MCF 10A (cell line): ENCODE measurements at regions of chr1 and their contacts with region 1.

Region 1: GRCh38 chr1:6052543-6053205 is 7.0 kb downstream of the KCNAB2 start:
- DNase-seq: peak; percentile 72
- H3K4me3 Mint-ChIP-seq: no peak overlapping the region
- H3K27ac Mint-ChIP-seq: no peak overlapping the region
- H3K4me1 Mint-ChIP-seq: peaks cover 10% of the 10 kb centered on the region
- H3K27me3 Mint-ChIP-seq: no peaks in the 10 kb centered on the region
- CTCF ChIP-seq: peak; percentile 45

Region 2: GRCh38 chr1:6199298-6200187 is 146.9 kb after region 1 on chr1 and contains the start of gene RPL22:
- CTCF ChIA-PET with region 1: no interaction called
- POLR2A ChIA-PET with region 1: interaction called, 4 read pairs
- intact Hi-C with region 1: loop called (anchors 10 kb)
- DNase-seq: peak; percentile 100
- H3K4me3 Mint-ChIP-seq: peak within 1 kb of the TSS; percentile 87
- H3K27ac Mint-ChIP-seq: peak within 1 kb of the TSS; percentile 97
- H3K4me1 Mint-ChIP-seq: peaks cover 25% of the 10 kb centered on the region
- H3K27me3 Mint-ChIP-seq: no peaks in the 10 kb centered on the region
- CTCF ChIP-seq: no peak
- total RNA-seq, gene RPL22: 477 and 513 TPM in 2 replicates

Region 3: DNA sequence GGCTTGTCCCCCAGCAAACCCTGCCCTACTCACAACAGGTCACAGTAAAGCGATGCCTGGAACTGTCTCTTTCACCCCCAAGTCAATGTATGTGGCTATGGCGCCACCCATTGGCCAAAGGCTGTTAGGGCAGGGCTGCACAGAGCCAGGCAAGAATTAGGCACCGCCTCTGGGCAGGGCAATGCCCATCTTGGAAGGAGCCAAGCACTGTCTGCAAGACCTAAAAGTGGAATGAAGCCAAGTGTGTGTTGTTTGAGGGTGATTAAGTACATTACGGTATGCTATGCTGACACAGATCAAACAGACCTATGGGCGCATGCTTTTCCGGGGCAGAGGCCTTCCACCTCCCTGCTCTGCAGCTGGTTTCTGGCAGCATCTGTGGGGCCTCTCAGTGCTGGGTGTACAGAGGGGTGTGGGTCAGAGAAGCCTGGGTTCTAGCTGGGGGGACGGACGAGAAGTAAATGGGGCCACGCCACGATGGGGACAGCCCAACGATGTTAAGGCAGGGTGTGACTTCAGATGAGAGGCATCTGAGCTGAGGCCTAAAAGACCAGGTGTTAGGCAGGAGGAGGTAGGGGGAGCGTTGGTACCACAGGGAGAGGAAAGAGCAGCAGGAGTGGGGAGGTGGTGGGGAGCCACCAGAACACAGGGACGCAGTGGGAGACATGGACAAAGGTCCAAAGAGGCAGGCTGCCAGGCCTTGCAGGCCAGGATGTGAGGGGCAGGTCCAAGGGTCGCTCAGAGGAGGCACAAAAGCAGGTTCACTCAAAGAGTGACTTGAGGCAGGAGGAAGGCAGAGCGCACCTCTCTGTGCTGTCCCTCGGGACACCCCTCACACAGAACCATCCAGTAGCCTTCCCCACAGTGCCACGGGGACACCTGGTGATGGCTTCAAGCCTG is 291.1 kb after region 1 on chr1:
- CTCF ChIA-PET with region 1: interaction called, 8 read pairs
- POLR2A ChIA-PET with region 1: no interaction called
- intact Hi-C with region 1: loop called (anchors 1 kb)
- DNase-seq: peak; percentile 98
- H3K4me3 Mint-ChIP-seq: no peak overlapping the region
- H3K27ac Mint-ChIP-seq: peak overlapping the region; percentile 68
- H3K4me1 Mint-ChIP-seq: peaks cover 15% of the 10 kb centered on the region
- H3K27me3 Mint-ChIP-seq: no peaks in the 10 kb centered on the region
- CTCF ChIP-seq: peak; percentile 93